ENCODE measurements at regions of chr15 and their contacts with region 1.

Region 1: GRCh38 chr15:75661091-75661777 is 13.5 kb downstream of the SNX33 start:
- DNase-seq: peak; percentile 66 to 96
- H3K4me3 ChIP-seq: peak overlapping the region in 1 of 2 donors; percentile 42
- H3K27ac ChIP-seq: peak overlapping the region; percentile 95 to 97
- H3K4me1 ChIP-seq: peaks cover 16 to 51% of the 10 kb centered on the region in 2 donors
- H3K27me3 ChIP-seq: no peaks in the 10 kb centered on the region
- CTCF ChIP-seq: no peak

Region 2: GRCh38 chr15:75647370-75648155 is 13.7 kb before region 1 on chr15 and contains the start of gene SNX33:
- intact Hi-C with region 1: loop called (anchors 2 kb)
- DNase-seq: peak in 1 of 2 donors; percentile 91
- H3K4me3 ChIP-seq: peak within 1 kb of the TSS; percentile 86 to 94
- H3K27ac ChIP-seq: peak within 1 kb of the TSS; percentile 98 to 99
- H3K4me1 ChIP-seq: peaks cover 24 to 43% of the 10 kb centered on the region in 2 donors
- H3K27me3 ChIP-seq: no peaks in the 10 kb centered on the region
- CTCF ChIP-seq: peak; percentile 35 to 59 (median 46)
- total RNA-seq, gene SNX33: 53.5 TPM